Mucosa of descending colon (tissue), 3 donors: ENCODE measurements at regions of chr7 and their contacts with region 1.

Region 1: GRCh38 chr7:101542527-101543241 is 86.4 kb downstream of the MYL10 start:
- DNase-seq: peak in 2 of 3 donors; percentile 76 to 93
- ATAC-seq: peak; percentile 78
- H3K4me3 ChIP-seq: no peak overlapping the region
- H3K4me1 ChIP-seq: no peaks in the 10 kb centered on the region
- CTCF ChIP-seq: peak; percentile 68

Region 2: GRCh38 chr7:101153969-101154692 is 388.6 kb before region 1 on chr7 and contains the start of gene AP1S1:
- intact Hi-C with region 1: no loop called
- DNase-seq: peak; percentile 96 to 97 (median 96)
- ATAC-seq: peak; percentile 97
- H3K4me3 ChIP-seq: peak within 1 kb of the TSS; percentile 68
- H3K4me1 ChIP-seq: peaks cover 9% of the 10 kb centered on the region
- CTCF ChIP-seq: peak; percentile 9
- total RNA-seq, gene AP1S1: 32.3 to 83.6 (median 63.9) TPM

Region 3: DNA sequence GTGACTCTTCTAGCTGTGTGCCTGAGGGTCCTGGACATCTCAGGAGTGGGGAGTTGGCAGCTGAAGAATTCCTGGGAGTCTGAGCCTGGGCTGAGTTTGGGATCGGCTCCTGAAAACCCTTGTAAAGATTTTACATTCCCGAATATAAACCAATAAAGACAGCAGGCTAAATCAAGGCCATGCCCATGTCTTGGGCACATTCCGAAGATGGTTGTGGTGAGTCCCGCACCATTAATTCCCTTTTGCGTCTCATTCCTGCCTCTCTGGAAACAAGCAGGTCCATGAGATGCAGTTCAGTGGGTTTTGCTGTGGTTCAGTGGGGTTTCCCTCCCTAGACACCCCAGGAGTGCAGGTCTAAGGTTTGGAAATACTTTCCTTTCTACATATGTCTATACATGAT is 89.1 kb before region 1 on chr7:
- intact Hi-C with region 1: no loop called
- DNase-seq: no peak
- ATAC-seq: no peak
- H3K4me3 ChIP-seq: no peak overlapping the region
- H3K4me1 ChIP-seq: no peaks in the 10 kb centered on the region
- CTCF ChIP-seq: no peak

Region 4: DNA sequence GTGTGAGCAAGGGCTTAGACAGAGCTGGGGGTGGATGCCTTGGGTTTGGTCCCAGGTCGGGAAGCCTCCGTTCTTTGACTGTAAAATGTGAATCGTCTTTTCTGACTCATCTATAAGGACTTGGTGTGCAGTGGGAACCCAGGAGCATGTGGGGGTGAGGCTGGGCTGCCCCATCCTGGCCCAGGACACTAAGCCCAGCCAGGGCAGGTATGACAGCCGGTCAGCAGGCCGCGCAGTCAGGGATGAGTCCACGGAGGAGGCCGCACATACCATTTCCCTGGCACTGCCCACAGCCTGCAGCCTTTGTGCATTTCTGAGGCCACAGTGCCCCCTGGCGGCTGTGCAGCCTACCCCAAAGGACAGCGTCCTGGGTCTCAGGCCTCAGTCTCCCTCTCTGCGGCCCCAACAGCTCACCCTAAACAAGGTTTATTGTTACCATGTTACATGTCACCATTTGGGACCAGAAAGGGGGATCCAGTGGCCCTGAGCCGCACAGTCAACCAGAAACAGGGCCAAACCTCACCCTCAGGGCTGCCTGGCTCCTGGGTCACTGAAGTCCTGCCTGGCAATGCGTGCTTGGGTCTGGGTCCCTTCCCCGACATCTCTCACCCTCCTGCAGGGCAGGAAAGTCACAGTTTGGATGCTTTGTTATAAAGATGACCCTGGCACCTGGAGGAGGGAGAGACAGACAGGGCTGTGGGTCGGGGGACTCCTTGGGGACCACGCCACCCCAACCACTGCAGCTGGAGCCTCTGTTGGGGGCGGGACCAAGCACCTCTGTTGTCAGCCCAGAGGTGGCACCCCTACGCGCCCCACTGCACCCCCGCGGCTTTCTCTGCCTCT is 729.6 kb after region 1 on chr7:
- intact Hi-C with region 1: loop called in 1 of 2 experiments (anchors 5 kb)
- DNase-seq: peak; percentile 76 to 90 (median 87)
- ATAC-seq: peak; percentile 79
- H3K4me3 ChIP-seq: no peak overlapping the region
- H3K4me1 ChIP-seq: peaks cover 14% of the 10 kb centered on the region
- CTCF ChIP-seq: peak; percentile 86